Sciatic nerve (tissue), 2 donors: ENCODE measurements at regions of chr1 and their contacts with region 1.

Region 1: DNA sequence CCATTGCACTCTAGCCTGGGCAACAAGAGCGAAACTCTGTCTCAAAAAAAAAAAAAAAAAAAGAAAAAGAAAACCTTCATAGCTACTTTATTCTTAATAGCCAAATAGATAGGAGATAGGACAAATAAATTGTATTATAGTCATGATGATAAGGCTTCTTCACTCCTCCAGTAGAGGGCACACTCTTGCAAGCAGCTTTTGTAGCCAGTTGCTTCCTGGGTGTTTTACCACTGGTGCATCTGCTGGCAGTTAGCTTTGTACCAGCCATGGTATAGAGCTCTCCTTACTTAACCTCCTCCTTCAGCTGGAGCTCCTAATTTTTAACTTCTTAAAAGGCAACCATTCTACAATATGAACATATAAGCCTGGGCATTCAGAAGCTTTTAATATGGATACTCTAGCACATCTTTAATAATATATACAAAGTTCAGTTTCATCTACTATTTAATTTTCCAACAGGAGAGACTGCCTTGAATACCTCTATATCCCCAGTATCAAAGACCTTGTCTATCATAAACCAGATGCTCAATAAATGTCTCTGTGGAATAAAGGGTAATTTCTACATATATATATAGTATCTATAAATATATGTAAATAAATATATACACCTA is 35.8 kb downstream of the EVI5 start:
- DNase-seq: no peak
- ATAC-seq: no peak

Region 2: GRCh38 chr1:92784021-92784638 is 35.0 kb after region 1 on chr1:
- intact Hi-C with region 1: loop called (anchors 1 kb)
- DNase-seq: peak; percentile 69
- ATAC-seq: no peak